HepG2 (cell line): ENCODE measurements at regions of chr19 and their contacts with region 1.

Region 1: DNA sequence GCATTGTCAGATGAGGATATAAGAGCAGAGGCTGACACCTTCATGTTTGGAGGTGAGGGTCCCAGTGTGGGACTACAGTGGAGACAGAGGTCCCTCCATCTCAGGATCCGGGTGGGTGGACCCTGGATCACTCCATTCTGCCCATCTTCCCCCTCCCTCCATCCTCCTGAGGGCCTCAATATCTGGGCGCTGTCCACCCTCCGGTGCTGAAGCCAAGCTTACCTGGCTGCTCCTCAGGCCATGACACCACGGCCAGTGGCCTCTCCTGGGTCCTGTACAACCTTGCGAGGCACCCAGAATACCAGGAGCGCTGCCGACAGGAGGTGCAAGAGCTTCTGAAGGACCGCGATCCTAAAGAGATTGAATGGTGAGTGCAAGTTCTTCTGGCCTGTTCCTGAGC is 11.9 kb downstream of the CYP4F12 start:
- DNase-seq: no peak
- ATAC-seq: no peak
- H3K4me3 ChIP-seq: no peak overlapping the region
- H3K27ac ChIP-seq: no peak overlapping the region
- H3K4me1 ChIP-seq: peaks cover 25% of the 10 kb centered on the region
- H3K27me3 ChIP-seq: no peaks in the 10 kb centered on the region
- CTCF ChIP-seq: no peak
- EP300 ChIP-seq: no peak
- POLR2A ChIP-seq: no peak
- RAD21 ChIP-seq: no peak

Region 2: GRCh38 chr19:15449620-15450527 is 235.0 kb before region 1 on chr19 and contains the start of gene WIZ:
- CTCF ChIA-PET with region 1: no interaction called
- POLR2A ChIA-PET with region 1: no interaction called
- in situ Hi-C with region 1: no loop called
- intact Hi-C with region 1: no loop called
- DNase-seq: peak; percentile 35
- ATAC-seq: no peak
- H3K4me3 ChIP-seq: peak within 1 kb of the TSS; percentile 62 to 82 (median 80)
- H3K27ac ChIP-seq: no peak within 1 kb of the TSS
- H3K4me1 ChIP-seq: peaks cover 37% of the 10 kb centered on the region
- H3K27me3 ChIP-seq: no peaks in the 10 kb centered on the region
- CTCF ChIP-seq: no peak
- EP300 ChIP-seq: no peak
- POLR2A ChIP-seq: no peak
- RAD21 ChIP-seq: no peak
- total RNA-seq, gene WIZ: 4.7 and 5.1 TPM in 2 replicates

Region 3: GRCh38 chr19:15640294-15640903 is 44.4 kb before region 1 on chr19 and contains the start of gene CYP4F3:
- CTCF ChIA-PET with region 1: no interaction called
- POLR2A ChIA-PET with region 1: interaction called, 12 read pairs
- in situ Hi-C with region 1: no loop called
- intact Hi-C with region 1: no loop called
- DNase-seq: peak; percentile 81
- ATAC-seq: peak; percentile 81
- H3K4me3 ChIP-seq: peak within 1 kb of the TSS; percentile 57 to 80 (median 61)
- H3K27ac ChIP-seq: peak within 1 kb of the TSS; percentile 90
- H3K4me1 ChIP-seq: peaks cover 76% of the 10 kb centered on the region
- H3K27me3 ChIP-seq: no peaks in the 10 kb centered on the region
- CTCF ChIP-seq: no peak
- EP300 ChIP-seq: peak in 1 of 2 experiments; percentile 46; a peak in 2 of 4 replicates
- POLR2A ChIP-seq: no peak
- RAD21 ChIP-seq: no peak
- total RNA-seq, gene CYP4F3: 5.6 and 17.8 TPM in 2 replicates

Region 4: GRCh38 chr19:15666883-15667282 is 17.9 kb before region 1 on chr19:
- CTCF ChIA-PET with region 1: no interaction called
- POLR2A ChIA-PET with region 1: interaction called, 12 read pairs
- in situ Hi-C with region 1: no loop called
- intact Hi-C with region 1: loop called (anchors 1 kb)
- DNase-seq: no peak
- ATAC-seq: no peak
- H3K4me3 ChIP-seq: no peak overlapping the region
- H3K27ac ChIP-seq: no peak overlapping the region
- H3K4me1 ChIP-seq: peaks cover under 1% of the 10 kb centered on the region
- H3K27me3 ChIP-seq: no peaks in the 10 kb centered on the region
- CTCF ChIP-seq: no peak
- EP300 ChIP-seq: no peak
- POLR2A ChIP-seq: no peak
- RAD21 ChIP-seq: no peak

Region 5: GRCh38 chr19:15730538-15730937 is 45.7 kb after region 1 on chr19:
- CTCF ChIA-PET with region 1: no interaction called
- POLR2A ChIA-PET with region 1: no interaction called
- in situ Hi-C with region 1: no loop called
- intact Hi-C with region 1: no loop called
- DNase-seq: no peak
- ATAC-seq: no peak
- H3K4me3 ChIP-seq: no peak overlapping the region
- H3K27ac ChIP-seq: no peak overlapping the region
- H3K4me1 ChIP-seq: no peaks in the 10 kb centered on the region
- H3K27me3 ChIP-seq: no peaks in the 10 kb centered on the region
- CTCF ChIP-seq: no peak
- EP300 ChIP-seq: no peak
- POLR2A ChIP-seq: no peak
- RAD21 ChIP-seq: no peak